Natural killer cell (primary cell): ENCODE measurements at regions of chr3 and their contacts with region 1.

Region 1: GRCh38 chr3:192444096-192444790 is 283.1 kb downstream of the FGF12 start:
- DNase-seq: peak in 1 of 2 donors; percentile 59
- ATAC-seq: peak in 2 of 3 donors; percentile 40 to 64
- H3K4me3 ChIP-seq: no peak overlapping the region
- H3K4me3 Mint-ChIP-seq: no peak overlapping the region
- H3K27ac ChIP-seq: no peak overlapping the region
- H3K27ac Mint-ChIP-seq: no peak overlapping the region
- H3K4me1 ChIP-seq: no peaks in the 10 kb centered on the region
- H3K4me1 Mint-ChIP-seq: no peaks in the 10 kb centered on the region
- H3K27me3 ChIP-seq: no peaks in the 10 kb centered on the region
- H3K27me3 Mint-ChIP-seq: peaks cover 0 to 8% of the 10 kb centered on the region in 2 donors
- CTCF ChIP-seq: peak; percentile 61

Region 2: GRCh38 chr3:191412759-191413158 is 1031.5 kb before region 1 on chr3:
- intact Hi-C with region 1: loop called (anchors 10 kb)
- DNase-seq: no peak
- ATAC-seq: no peak
- H3K4me3 ChIP-seq: no peak overlapping the region
- H3K4me3 Mint-ChIP-seq: no peak overlapping the region
- H3K27ac ChIP-seq: no peak overlapping the region
- H3K27ac Mint-ChIP-seq: no peak overlapping the region
- H3K4me1 ChIP-seq: no peaks in the 10 kb centered on the region
- H3K4me1 Mint-ChIP-seq: no peaks in the 10 kb centered on the region
- H3K27me3 ChIP-seq: no peaks in the 10 kb centered on the region
- H3K27me3 Mint-ChIP-seq: no peaks in the 10 kb centered on the region
- CTCF ChIP-seq: no peak

Region 3: DNA sequence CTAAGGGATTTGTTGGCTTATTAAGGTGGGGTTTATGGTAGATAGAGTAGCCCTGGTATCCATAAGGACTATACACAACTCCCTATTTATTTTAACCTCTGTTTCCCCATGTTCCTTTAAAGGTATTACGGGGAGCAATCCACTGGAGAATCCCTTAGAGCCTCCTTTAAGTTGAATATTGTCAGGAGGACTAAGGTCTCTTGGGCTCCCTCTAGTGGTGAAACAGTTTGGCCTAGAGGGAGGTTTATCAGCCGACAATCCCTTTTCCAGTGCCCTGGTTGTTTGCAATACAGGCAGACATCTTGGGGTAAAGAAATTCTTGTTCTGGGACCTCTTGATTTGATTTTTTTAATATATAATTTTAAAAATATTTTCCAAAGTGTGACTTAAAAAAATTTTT is 1161.6 kb after region 1 on chr3:
- intact Hi-C with region 1: no loop called
- DNase-seq: peak in 1 of 2 donors; percentile 83
- ATAC-seq: peak; percentile 81 to 93 (median 89)
- H3K4me3 ChIP-seq: no peak overlapping the region
- H3K4me3 Mint-ChIP-seq: no peak overlapping the region
- H3K27ac ChIP-seq: no peak overlapping the region
- H3K27ac Mint-ChIP-seq: no peak overlapping the region
- H3K4me1 ChIP-seq: no peaks in the 10 kb centered on the region
- H3K4me1 Mint-ChIP-seq: peaks cover 44 to 52% of the 10 kb centered on the region in 2 donors
- H3K27me3 ChIP-seq: no peaks in the 10 kb centered on the region
- H3K27me3 Mint-ChIP-seq: no peaks in the 10 kb centered on the region
- CTCF ChIP-seq: peak; percentile 95